ENCODE measurements at regions of chr7 and their contacts with region 1.

Region 1: DNA sequence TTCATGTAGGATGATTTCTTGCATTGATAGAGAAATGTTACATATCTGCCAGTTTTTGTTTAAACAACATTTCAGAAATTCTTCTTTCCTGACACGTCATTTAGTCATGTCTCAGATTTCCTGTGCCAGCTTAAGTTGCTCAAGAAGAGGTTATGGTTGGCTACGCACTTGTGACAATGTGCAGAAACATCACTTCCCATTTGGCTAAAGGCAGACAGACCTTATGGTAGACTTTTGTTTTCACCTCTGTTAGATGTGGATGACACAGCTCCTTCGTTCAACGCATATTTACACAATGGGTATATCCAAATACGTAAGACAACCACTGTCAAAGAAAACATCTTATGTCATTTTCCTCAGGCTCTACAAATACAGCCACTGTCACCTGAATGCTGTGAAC is 125.8 kb downstream of the DOCK4 start:
- DNase-seq: no peak
- ATAC-seq: peak; percentile 84
- H3K4me3 Mint-ChIP-seq: peak overlapping the region; percentile 33
- H3K27ac Mint-ChIP-seq: peak overlapping the region; percentile 33
- H3K4me1 Mint-ChIP-seq: peaks cover 48% of the 10 kb centered on the region
- H3K27me3 Mint-ChIP-seq: no peaks in the 10 kb centered on the region
- CTCF ChIP-seq: no peak

Region 2: GRCh38 chr7:112092709-112093395 is 12.4 kb after region 1 on chr7:
- CTCF ChIA-PET with region 1: no interaction called
- POLR2A ChIA-PET with region 1: no interaction called
- intact Hi-C with region 1: no loop called
- DNase-seq: no peak
- ATAC-seq: no peak
- H3K4me3 Mint-ChIP-seq: no peak overlapping the region
- H3K27ac Mint-ChIP-seq: no peak overlapping the region
- H3K4me1 Mint-ChIP-seq: no peaks in the 10 kb centered on the region
- H3K27me3 Mint-ChIP-seq: no peaks in the 10 kb centered on the region
- CTCF ChIP-seq: no peak

Region 3: GRCh38 chr7:112206238-112207044 is 126.0 kb after region 1 on chr7 and contains the starts of genes DOCK4 and ZNF277:
- CTCF ChIA-PET with region 1: interaction called, 3 read pairs
- POLR2A ChIA-PET with region 1: no interaction called
- intact Hi-C with region 1: loop called (anchors 1 kb)
- DNase-seq: peak; percentile 99
- ATAC-seq: peak; percentile 90
- H3K4me3 Mint-ChIP-seq: peak within 1 kb of the TSS; percentile 97
- H3K27ac Mint-ChIP-seq: peak within 1 kb of the TSS; percentile 83
- H3K4me1 Mint-ChIP-seq: peaks cover 37% of the 10 kb centered on the region
- H3K27me3 Mint-ChIP-seq: peaks cover 25% of the 10 kb centered on the region
- CTCF ChIP-seq: no peak
- total RNA-seq, gene DOCK4: 0.61 and 0.73 TPM in 2 replicates
- total RNA-seq, gene ZNF277: 12.6 and 13.1 TPM in 2 replicates

Region 4: GRCh38 chr7:112386619-112387018 is 306.2 kb after region 1 on chr7:
- CTCF ChIA-PET with region 1: no interaction called
- POLR2A ChIA-PET with region 1: no interaction called
- intact Hi-C with region 1: loop called (anchors 5 kb)
- DNase-seq: no peak
- ATAC-seq: no peak
- H3K4me3 Mint-ChIP-seq: no peak overlapping the region
- H3K27ac Mint-ChIP-seq: no peak overlapping the region
- H3K4me1 Mint-ChIP-seq: peaks cover 5% of the 10 kb centered on the region
- H3K27me3 Mint-ChIP-seq: peaks cover 5% of the 10 kb centered on the region
- CTCF ChIP-seq: no peak

Region 5: DNA sequence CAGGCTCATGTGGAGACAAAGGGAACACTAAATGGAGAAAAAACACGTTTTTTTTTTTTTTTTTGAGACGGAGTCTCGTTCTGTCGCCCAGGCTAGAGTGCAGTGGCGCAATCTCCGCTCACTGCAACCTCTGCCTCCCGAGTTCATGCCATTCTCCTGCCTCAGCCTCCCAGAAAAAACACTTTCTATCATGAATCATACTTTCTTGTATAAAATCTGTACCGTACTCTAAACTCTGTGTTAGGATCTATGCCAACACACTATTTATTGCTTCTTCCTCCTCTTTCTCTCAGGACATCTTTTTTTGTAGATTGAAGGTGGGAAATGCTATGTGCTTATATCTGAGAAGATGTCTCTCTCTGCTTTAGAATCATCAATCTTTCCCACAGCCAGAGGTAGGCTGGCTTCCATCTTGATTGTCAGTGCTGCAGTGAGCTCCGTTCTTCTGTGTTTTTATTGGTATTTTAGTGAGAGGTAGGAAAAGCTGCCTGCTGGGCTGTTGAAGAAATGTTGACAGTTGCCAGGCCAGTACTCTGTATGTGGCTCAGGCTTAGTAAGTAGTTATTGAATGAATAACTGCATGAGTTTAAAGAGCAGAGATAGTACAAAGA is 905.0 kb after region 1 on chr7:
- CTCF ChIA-PET with region 1: no interaction called
- POLR2A ChIA-PET with region 1: no interaction called
- intact Hi-C with region 1: no loop called
- DNase-seq: no peak
- ATAC-seq: no peak
- H3K4me3 Mint-ChIP-seq: no peak overlapping the region
- H3K27ac Mint-ChIP-seq: no peak overlapping the region
- H3K4me1 Mint-ChIP-seq: peaks cover 28% of the 10 kb centered on the region
- H3K27me3 Mint-ChIP-seq: no peaks in the 10 kb centered on the region
- CTCF ChIP-seq: no peak